GM23248 (cell line): ENCODE measurements at regions of chr18 and their contacts with region 1.

Region 1: GRCh38 chr18:24488824-24489493 is 28.5 kb downstream of the HRH4 start:
- DNase-seq: peak; percentile 54
- H3K4me3 ChIP-seq: no peak overlapping the region
- H3K27ac ChIP-seq: no peak overlapping the region
- H3K4me1 ChIP-seq: peaks cover 8% of the 10 kb centered on the region; the same call in 1 of the 2 replicates
- H3K27me3 ChIP-seq: no peaks in the 10 kb centered on the region

Region 2: DNA sequence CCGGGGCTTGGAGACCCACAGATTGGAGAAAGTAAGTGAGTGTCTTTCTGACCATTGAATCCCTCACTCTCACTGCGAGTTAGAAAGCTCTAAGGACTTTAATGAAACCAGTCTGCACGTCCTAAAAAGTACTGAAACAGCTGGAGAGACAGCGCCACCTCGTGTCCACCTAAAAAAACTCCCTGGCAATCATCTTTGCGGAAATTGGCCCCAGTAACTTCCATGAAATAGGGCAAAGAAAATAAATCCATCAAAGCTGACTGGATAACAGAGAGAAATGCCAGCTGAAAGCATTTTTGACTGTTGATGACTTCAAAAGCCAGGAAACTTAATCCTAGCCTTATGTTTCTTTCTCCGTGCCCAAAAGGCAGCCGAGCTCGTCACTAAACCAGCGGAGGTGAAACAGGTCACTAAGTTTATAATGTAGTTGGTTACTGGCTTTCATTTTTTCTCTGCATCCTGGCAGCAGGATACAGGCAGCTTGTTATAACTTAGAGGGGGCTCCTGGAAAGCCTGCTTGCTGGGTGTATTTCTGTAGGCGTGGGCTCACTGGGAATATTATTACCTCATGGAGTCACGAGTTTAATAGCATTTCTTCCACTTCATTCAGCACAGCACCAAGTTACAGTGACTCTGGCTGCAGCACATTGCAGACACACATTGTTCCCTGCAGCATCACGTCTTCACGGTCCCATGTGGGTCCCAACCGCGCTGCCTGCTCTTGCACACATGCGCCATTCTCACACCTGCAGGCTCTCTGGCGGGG is 238.0 kb after region 1 on chr18:
- in situ Hi-C with region 1: loop called (anchors 25 kb)
- DNase-seq: peak; percentile 79
- H3K4me3 ChIP-seq: peak overlapping the region; percentile 69
- H3K27ac ChIP-seq: no peak overlapping the region
- H3K4me1 ChIP-seq: peaks cover 10% of the 10 kb centered on the region
- H3K27me3 ChIP-seq: peaks cover 37% of the 10 kb centered on the region